Dorsolateral prefrontal cortex (tissue), 120 donors: ENCODE measurements at regions of chr3 and their contacts with region 1.

Region 1: GRCh38 chr3:184711493-184712247 is at the start of gene MAGEF1:
- DNase-seq: peak; percentile 63 to 85 (median 78)
- H3K4me3 ChIP-seq: peak within 1 kb of the TSS; percentile 62 to 98 (median 90)
- H3K27ac ChIP-seq: peak within 1 kb of the TSS; percentile 27 to 98 (median 93)
- H3K27me3 ChIP-seq: no peaks in the 10 kb centered on the region
- CTCF ChIP-seq: peak in 11 of 56 donors; percentile 7 to 35 (median 17)
- total RNA-seq, gene MAGEF1: 21.7 to 62.9 (median 43.4) TPM

Region 2: GRCh38 chr3:184568924-184569829 is 142.5 kb before region 1 on chr3:
- intact Hi-C with region 1: loop called (anchors 2 to 5 kb)
- DNase-seq: peak in 7 of 10 donors; percentile 65 to 78 (median 71)
- H3K4me3 ChIP-seq: peak overlapping the region; percentile 22 to 75 (median 61)
- H3K27ac ChIP-seq: peak overlapping the region in 55 of 59 donors; percentile 2 to 90 (median 74)
- H3K27me3 ChIP-seq: no peaks in the 10 kb centered on the region
- CTCF ChIP-seq: peak in 1 of 56 donors; percentile 10

Region 3: DNA sequence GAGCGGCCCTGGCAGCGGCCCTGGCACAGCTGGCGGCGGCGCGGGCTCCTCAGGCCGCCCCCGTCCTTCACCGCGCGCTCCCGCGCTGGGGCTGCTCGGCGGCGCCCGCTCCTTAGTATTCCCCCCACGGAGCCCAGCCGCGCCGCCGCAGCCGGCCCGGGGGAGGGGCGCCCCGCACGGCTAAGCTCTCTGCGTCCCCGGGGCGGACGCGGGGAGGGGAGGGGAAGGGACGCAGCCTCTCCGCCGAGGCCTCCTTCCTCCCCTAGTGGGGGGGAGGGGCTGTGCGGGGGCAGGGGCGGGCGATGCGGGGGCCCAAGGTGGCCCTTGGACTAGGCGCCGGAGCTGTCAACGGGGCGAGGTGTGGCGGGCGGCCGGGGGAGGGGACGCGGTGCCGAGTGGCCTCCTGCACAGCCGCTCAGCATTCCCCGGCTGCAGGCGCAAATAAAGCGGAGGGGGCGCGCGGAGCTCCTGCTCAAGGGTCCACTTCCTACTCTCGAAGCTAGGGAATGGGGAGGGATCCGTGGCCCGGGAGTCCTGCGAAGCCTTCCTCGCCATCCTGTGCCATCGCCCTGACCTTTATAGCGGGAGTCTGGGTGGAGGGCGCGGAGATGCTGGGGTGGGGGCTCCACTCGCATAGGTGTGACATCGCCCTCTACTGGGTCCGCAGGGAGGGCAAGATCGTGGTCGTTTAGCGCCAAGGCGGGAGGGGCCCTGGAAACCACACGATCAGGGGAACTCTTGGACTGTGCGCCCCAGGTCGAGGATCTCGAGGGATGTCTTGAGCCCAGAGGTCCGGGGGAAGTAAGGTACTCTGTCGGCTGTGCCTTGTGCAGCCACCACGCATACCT is 127.9 kb before region 1 on chr3:
- intact Hi-C with region 1: loop called (anchors 5 kb)
- DNase-seq: peak in 9 of 10 donors; percentile 55 to 87 (median 65)
- H3K4me3 ChIP-seq: peak overlapping the region; percentile 52 to 81 (median 69)
- H3K27ac ChIP-seq: peak overlapping the region; percentile 15 to 97 (median 89)
- H3K27me3 ChIP-seq: no peaks in the 10 kb centered on the region
- CTCF ChIP-seq: peak in 40 of 56 donors; percentile 0 to 48 (median 32)

Region 4: DNA sequence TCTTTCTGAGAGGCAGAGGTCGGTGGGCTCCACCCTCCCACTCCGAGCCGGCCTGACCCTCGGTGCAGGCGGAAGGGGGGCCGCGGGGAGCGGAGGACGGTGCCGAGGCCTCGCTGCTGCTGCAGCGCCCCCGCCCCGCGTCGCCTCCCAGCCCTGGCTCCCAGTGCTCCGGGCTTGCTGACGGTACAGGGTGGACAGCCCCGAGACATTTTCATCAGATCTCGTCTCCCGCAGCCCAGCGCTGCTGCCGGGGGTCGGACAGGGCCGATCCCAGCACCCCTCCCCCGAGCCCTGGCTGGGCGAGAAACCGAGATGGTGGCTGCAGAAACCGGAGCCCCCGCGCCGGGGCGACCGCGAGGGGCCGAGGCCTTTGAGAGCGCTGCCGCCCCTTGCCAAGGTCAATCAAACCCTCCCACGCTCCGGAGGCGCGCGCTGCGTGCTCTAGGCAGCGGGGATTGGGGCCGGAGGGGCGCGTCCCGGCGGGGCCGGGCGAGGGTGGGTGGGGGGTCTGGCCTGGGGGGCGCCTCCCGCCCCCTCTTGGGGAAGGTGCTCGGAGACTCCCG is 107.5 kb before region 1 on chr3:
- intact Hi-C with region 1: loop called in 1 of 2 experiments (anchors 5 kb)
- DNase-seq: peak in 1 of 10 donors; percentile 15
- H3K4me3 ChIP-seq: peak overlapping the region; percentile 14 to 67 (median 50)
- H3K27ac ChIP-seq: peak overlapping the region in 3 of 59 donors; percentile 6 to 38 (median 11)
- H3K27me3 ChIP-seq: peaks cover 0 to 49% (median 19%) of the 10 kb centered on the region in 45 donors
- CTCF ChIP-seq: no peak